Breast epithelium (tissue), 4 donors: ENCODE measurements at regions of chr18 and their contacts with region 1.

Region 1: GRCh38 chr18:54558609-54559585 is 32.1 kb upstream of the DYNAP start:
- DNase-seq: no peak
- H3K4me3 ChIP-seq: no peak overlapping the region
- H3K27ac ChIP-seq: no peak overlapping the region
- H3K4me1 ChIP-seq: no peaks in the 10 kb centered on the region
- H3K27me3 ChIP-seq: no peaks in the 10 kb centered on the region
- CTCF ChIP-seq: peak; percentile 44 to 63 (median 53)
- POLR2A ChIP-seq: no peak

Region 2: GRCh38 chr18:54503131-54503894 is 55.6 kb before region 1 on chr18:
- intact Hi-C with region 1: loop called (anchors 5 kb)
- DNase-seq: no peak
- H3K4me3 ChIP-seq: no peak overlapping the region
- H3K27ac ChIP-seq: no peak overlapping the region
- H3K4me1 ChIP-seq: no peaks in the 10 kb centered on the region
- H3K27me3 ChIP-seq: no peaks in the 10 kb centered on the region
- CTCF ChIP-seq: no peak
- POLR2A ChIP-seq: no peak

Region 3: GRCh38 chr18:54679318-54680149 is 120.6 kb after region 1 on chr18:
- intact Hi-C with region 1: loop called (anchors 10 kb)
- DNase-seq: no peak
- H3K4me3 ChIP-seq: no peak overlapping the region
- H3K27ac ChIP-seq: no peak overlapping the region
- H3K4me1 ChIP-seq: no peaks in the 10 kb centered on the region
- H3K27me3 ChIP-seq: no peaks in the 10 kb centered on the region
- CTCF ChIP-seq: peak in 2 of 3 donors; percentile 50 to 51
- POLR2A ChIP-seq: no peak